Heart left ventricle (tissue), 16 donors: ENCODE measurements at regions of chr5 and their contacts with region 1.

Region 1: GRCh38 chr5:161602739-161603138 is 56.2 kb upstream of the GABRB2 start:
- DNase-seq: no peak
- ATAC-seq: no peak
- H3K4me3 ChIP-seq: no peak overlapping the region
- H3K27ac ChIP-seq: no peak overlapping the region
- H3K4me1 ChIP-seq: no peaks in the 10 kb centered on the region
- H3K27me3 ChIP-seq: no peaks in the 10 kb centered on the region
- CTCF ChIP-seq: no peak
- POLR2A ChIP-seq: no peak

Region 2: GRCh38 chr5:161544350-161544765 is 58.4 kb before region 1 on chr5:
- intact Hi-C with region 1: loop called in 1 of 10 experiments (anchors 2 kb)
- DNase-seq: peak in 1 of 5 donors; percentile 23
- ATAC-seq: no peak
- H3K4me3 ChIP-seq: no peak overlapping the region
- H3K27ac ChIP-seq: no peak overlapping the region
- H3K4me1 ChIP-seq: peaks cover 0 to 29% (median 6%) of the 10 kb centered on the region in 12 donors
- H3K27me3 ChIP-seq: peaks cover 17 to 71% (median 38%) of the 10 kb centered on the region in 9 donors
- CTCF ChIP-seq: peak; percentile 37 to 72 (median 58)
- POLR2A ChIP-seq: no peak